ENCODE measurements at regions of chr13 and their contacts with region 1.

Region 1: GRCh38 chr13:101098873-101099272 is 317.4 kb downstream of the NALCN start:
- DNase-seq: no peak
- ATAC-seq: no peak
- H3K4me3 ChIP-seq: no peak overlapping the region
- H3K27ac ChIP-seq: no peak overlapping the region
- H3K4me1 ChIP-seq: no peaks in the 10 kb centered on the region
- H3K27me3 ChIP-seq: no peaks in the 10 kb centered on the region
- CTCF ChIP-seq: no peak

Region 2: DNA sequence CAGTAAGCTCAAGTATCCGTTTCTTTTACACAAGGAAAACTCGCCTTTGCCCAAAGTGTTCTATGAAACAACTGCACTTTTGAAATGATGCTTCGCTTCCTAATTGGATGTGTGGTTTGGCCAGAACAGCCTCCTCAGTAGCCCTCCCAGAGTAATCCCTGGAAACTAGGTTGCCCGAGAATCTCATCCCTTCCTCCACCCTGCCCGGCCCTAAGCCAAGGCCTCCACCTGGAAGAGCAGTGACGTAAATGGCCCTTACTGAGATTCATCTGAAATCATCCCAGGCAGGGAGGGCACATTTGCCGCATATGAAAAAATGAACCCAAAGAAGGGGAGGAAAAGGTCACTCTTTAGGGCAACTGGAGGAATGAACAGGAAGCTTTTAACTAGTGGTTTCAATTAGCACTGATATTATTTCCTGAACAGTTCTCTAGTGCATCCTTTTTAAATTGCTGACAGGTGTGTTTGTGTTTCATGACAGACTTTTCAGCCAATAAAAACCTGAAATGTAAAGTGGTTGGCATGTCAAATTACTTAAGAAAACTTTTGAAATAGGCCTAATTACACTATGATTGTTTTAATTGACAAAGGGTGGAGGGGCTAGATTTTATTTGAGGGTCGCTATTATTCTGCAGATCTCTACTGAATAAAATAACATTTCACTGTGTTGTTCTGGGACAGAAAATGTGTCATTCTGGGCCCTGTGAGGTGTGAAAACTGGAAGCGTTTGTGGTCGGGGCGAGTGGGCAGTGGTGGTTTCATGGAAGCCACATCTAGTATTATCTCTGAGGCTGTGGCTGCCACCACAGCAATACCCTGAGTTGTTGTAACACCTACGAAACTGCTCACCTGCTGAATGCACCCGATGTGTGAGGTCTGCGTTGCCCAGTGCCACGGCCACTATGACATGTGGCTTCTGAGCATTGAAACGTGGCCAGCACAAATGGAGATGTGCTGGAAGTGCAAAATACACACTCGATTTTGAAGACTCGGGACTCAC is 1239.4 kb before region 1 on chr13:
- CTCF ChIA-PET with region 1: no interaction called
- POLR2A ChIA-PET with region 1: no interaction called
- in situ Hi-C with region 1: no loop called
- intact Hi-C with region 1: no loop called
- DNase-seq: no peak
- ATAC-seq: no peak
- H3K4me3 ChIP-seq: no peak overlapping the region
- H3K27ac ChIP-seq: no peak overlapping the region
- H3K4me1 ChIP-seq: no peaks in the 10 kb centered on the region
- H3K27me3 ChIP-seq: no peaks in the 10 kb centered on the region
- CTCF ChIP-seq: no peak

Region 3: DNA sequence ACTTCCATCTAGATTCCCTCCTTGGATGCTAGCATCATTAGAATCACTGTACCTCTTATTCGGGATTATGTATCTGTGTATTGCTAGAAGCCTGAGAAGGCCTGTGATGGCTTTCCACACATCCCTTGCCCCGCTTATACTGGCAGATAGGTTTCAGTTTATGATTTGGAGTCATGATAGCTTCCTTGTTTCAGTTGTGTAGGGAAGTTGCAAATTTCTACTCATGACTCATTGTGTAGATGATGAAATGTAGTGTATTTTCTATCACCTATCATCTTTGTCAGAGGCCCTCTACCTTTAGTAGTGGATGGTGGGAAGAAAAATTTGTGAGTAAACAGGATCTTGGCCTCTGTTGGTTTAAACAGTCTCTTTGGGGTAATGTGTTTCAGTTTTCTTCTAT is 675.5 kb before region 1 on chr13:
- CTCF ChIA-PET with region 1: no interaction called
- POLR2A ChIA-PET with region 1: no interaction called
- in situ Hi-C with region 1: no loop called
- intact Hi-C with region 1: no loop called
- DNase-seq: no peak
- ATAC-seq: no peak
- H3K4me3 ChIP-seq: no peak overlapping the region
- H3K27ac ChIP-seq: peak overlapping the region; percentile 39; the same call in 1 of the 2 replicates
- H3K4me1 ChIP-seq: no peaks in the 10 kb centered on the region; the same call in 1 of the 2 replicates
- H3K27me3 ChIP-seq: no peaks in the 10 kb centered on the region
- CTCF ChIP-seq: no peak

Region 4: GRCh38 chr13:100721885-100722512 is 376.9 kb before region 1 on chr13:
- CTCF ChIA-PET with region 1: no interaction called
- POLR2A ChIA-PET with region 1: no interaction called
- in situ Hi-C with region 1: no loop called
- intact Hi-C with region 1: loop called (anchors 5 kb)
- DNase-seq: peak; percentile 33
- ATAC-seq: peak; percentile 75; the same call in 1 of the 2 replicates
- H3K4me3 ChIP-seq: no peak overlapping the region
- H3K27ac ChIP-seq: no peak overlapping the region
- H3K4me1 ChIP-seq: no peaks in the 10 kb centered on the region
- H3K27me3 ChIP-seq: no peaks in the 10 kb centered on the region
- CTCF ChIP-seq: peak; percentile 73

Region 5: GRCh38 chr13:100941377-100942368 is 157.2 kb before region 1 on chr13:
- CTCF ChIA-PET with region 1: no interaction called
- POLR2A ChIA-PET with region 1: no interaction called
- in situ Hi-C with region 1: no loop called
- intact Hi-C with region 1: no loop called
- DNase-seq: no peak
- ATAC-seq: no peak
- H3K4me3 ChIP-seq: no peak overlapping the region
- H3K27ac ChIP-seq: no peak overlapping the region
- H3K4me1 ChIP-seq: no peaks in the 10 kb centered on the region
- H3K27me3 ChIP-seq: no peaks in the 10 kb centered on the region
- CTCF ChIP-seq: no peak

Measured in Panc1 (cell line).